Dorsolateral prefrontal cortex (tissue), 120 donors: ENCODE measurements at regions of chr1 and their contacts with region 1.

Region 1: GRCh38 chr1:205528887-205529825 is 24.7 kb downstream of the CDK18 start:
- DNase-seq: peak; percentile 67 to 96 (median 88)
- H3K4me3 ChIP-seq: peak overlapping the region; percentile 17 to 62 (median 47)
- H3K27ac ChIP-seq: peak overlapping the region in 51 of 59 donors; percentile 3 to 91 (median 70)
- H3K27me3 ChIP-seq: no peaks in the 10 kb centered on the region
- CTCF ChIP-seq: peak; percentile 78 to 99 (median 96)

Region 2: GRCh38 chr1:205014783-205015182 is 514.4 kb before region 1 on chr1:
- intact Hi-C with region 1: no loop called
- DNase-seq: peak in 1 of 10 donors; percentile 25
- H3K4me3 ChIP-seq: no peak overlapping the region
- H3K27ac ChIP-seq: peak overlapping the region in 55 of 59 donors; percentile 38 to 89 (median 76)
- H3K27me3 ChIP-seq: no peaks in the 10 kb centered on the region
- CTCF ChIP-seq: no peak

Region 3: GRCh38 chr1:205111354-205111753 is 417.8 kb before region 1 on chr1:
- intact Hi-C with region 1: no loop called
- DNase-seq: no peak
- H3K4me3 ChIP-seq: no peak overlapping the region
- H3K27ac ChIP-seq: peak overlapping the region in 7 of 59 donors; percentile 15 to 77 (median 65)
- H3K27me3 ChIP-seq: no peaks in the 10 kb centered on the region
- CTCF ChIP-seq: no peak

Region 4: DNA sequence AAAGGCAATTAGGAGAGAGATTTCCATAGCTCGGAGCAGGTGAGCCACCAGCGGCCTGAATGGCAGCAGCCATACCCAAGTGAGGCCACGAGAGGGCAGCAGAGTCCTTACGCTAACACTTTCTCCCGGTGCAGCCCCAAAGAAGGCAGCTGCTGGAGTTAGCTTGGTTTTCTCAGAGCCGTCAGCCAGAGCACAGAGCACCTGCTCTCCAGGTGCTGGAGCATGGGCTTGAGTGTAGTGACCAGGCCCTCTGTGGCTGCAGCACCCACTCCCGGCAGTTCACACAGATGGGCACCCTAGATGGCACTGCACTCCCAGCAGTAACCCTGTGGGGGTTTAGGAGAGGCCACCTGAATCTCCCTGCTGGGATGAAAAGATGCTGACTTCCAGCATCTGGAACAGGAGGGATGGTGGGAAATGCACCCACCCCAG is 255.6 kb before region 1 on chr1:
- intact Hi-C with region 1: loop called in 1 of 2 experiments (anchors 10 kb)
- DNase-seq: peak; percentile 87 to 94 (median 90)
- H3K4me3 ChIP-seq: no peak overlapping the region
- H3K27ac ChIP-seq: peak overlapping the region; percentile 10 to 100 (median 92)
- H3K27me3 ChIP-seq: no peaks in the 10 kb centered on the region
- CTCF ChIP-seq: peak; percentile 94 to 100 (median 99)

Region 5: DNA sequence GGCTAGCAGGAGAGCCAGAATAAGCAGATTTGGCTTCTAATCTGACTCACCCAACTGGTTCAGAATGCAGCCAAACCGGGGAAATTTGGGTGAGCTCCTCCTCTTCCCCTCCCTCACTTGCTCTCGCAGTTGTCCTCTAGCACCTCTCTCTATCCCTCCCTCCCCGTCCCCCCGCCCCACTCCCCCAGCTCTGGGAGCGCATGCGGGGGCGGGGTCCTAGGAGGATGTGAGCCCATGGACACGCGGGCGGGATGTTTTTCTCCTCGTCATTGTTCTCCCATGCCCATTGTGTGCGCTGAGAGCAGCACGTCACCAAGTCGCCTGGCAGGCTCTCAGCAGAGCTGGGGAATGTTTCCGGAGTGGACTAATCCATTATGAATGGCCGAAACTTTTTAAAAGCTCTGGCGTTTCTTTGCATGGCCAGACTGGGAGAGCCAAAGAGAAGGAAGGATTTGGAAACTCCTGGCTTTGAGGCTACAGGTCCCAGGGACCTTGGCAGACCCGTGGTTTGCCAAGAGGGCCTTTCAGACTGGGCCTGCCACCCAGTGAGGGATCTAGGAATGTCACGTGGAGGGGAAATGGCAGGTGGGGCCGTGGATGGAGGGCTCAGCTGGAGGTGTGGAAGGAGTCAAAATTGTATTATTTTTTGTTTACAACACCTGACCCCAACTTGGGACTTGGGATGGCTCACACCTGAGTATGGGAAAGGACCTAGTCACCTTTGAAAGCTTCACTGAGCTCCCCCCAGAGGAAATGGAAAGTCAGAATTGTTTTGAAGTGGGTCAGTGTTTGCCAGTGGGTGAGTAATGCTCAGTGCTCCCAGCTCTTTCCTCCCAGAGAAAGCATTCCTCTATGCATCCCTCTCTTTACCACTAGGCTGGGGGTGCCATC is 14.5 kb after region 1 on chr1:
- intact Hi-C with region 1: loop called in 1 of 2 experiments (anchors 1 kb)
- DNase-seq: peak; percentile 58 to 92 (median 84)
- H3K4me3 ChIP-seq: peak overlapping the region; percentile 26 to 66 (median 52)
- H3K27ac ChIP-seq: peak overlapping the region in 52 of 59 donors; percentile 9 to 84 (median 70)
- H3K27me3 ChIP-seq: no peaks in the 10 kb centered on the region
- CTCF ChIP-seq: peak in 10 of 56 donors; percentile 1 to 31 (median 16)

Region 6: DNA sequence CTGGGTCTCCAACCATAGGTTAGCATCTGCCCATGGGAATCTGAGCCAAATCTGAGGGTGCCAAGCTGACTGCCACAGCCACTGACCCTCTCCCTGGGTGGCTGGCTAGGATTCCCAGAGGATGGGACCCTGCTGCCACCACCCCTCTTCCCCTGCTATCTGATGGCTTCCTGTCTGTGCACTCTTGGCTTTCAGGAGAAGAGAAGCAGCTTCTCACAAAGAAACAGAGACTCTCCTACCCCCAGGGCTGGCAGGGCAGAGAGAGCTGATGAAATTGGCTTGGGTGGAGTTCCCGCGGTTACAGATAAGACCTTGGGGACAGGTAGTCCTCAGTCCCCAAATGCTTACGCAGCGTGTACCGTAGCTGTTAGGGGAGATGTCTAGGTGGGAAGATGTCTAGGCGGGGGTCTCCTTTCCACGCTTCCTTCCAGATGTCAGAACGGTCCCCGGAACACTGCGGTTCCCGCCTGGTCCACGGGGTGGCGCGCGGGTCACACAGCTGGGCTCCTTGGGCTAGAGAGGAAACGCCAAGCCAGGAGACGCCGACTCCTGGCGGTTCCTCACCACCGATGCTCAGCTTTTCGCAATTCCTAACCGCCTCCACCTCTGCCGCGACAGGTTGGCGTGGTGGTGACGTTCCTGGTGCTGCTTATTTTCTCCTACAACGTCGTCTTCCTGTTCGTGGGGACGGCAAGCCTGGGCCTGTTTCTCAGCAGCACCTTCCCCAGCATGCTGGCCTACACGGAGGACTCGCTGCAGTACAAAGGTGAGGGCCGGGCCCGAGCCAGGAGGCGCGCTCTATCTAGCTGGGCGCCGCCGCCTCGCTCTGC is 62.6 kb after region 1 on chr1:
- intact Hi-C with region 1: loop called in 1 of 2 experiments (anchors 5 kb)
- DNase-seq: peak; percentile 84 to 94 (median 90)
- H3K4me3 ChIP-seq: peak overlapping the region; percentile 38 to 72 (median 58)
- H3K27ac ChIP-seq: peak overlapping the region in 52 of 59 donors; percentile 9 to 85 (median 66)
- H3K27me3 ChIP-seq: no peaks in the 10 kb centered on the region
- CTCF ChIP-seq: peak; percentile 79 to 100 (median 98)

Region 7: GRCh38 chr1:205645519-205645918 is 116.4 kb after region 1 on chr1:
- intact Hi-C with region 1: loop called in 1 of 2 experiments (anchors 5 kb)
- DNase-seq: no peak
- H3K4me3 ChIP-seq: no peak overlapping the region
- H3K27ac ChIP-seq: peak overlapping the region in 1 of 59 donors; percentile 16
- H3K27me3 ChIP-seq: no peaks in the 10 kb centered on the region
- CTCF ChIP-seq: no peak